Endothelial cell of umbilical vein (primary cell): ENCODE measurements at regions of chr4 and their contacts with region 1.

Region 1: DNA sequence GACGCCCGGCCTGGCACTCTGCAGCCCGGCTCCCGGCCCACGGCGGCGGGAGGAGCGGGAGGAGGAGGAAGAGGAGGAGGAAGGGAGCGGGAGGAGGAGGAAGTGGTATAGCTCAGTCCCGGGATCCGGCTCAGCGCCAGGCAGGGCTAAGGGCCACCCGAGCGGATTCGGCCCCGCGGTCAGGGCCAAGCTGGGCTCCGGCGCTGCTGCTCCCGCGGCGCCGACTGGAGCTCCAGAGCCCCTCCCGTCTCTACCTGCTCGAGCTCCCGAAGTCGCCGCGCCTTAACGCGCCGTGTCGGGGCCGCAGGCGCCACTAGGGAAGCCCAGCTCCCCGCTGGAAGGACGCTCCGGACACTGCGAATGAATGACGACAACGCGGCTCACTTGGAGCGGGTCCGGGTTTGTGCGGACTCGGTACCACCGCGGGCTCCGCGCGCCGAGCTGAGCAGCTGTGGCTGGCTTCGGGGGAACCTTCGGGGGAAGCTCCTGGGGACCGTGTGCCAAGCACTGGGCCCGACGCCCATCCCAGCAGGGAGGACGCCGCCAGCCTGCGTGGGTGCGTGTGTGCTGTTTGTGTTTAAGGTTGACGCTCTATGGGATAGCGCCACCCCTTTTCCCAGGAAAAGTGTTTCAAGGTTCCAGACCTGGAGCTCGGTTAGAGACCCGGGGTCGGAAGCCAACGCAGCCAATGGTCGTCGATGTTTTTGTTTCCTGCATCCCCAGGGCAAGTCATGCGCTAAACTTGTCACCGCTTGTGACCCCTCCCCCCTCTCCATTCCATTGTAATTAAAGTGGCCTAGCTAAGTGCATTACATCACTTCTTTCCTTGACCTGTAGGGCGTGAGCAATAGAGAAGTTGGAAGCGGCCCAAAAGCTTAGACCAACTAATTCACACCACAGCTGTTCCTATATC is at the start of gene TBC1D9:
- DNase-seq: peak; percentile 97
- H3K4me3 ChIP-seq: peak within 1 kb of the TSS; percentile 69 to 89 (median 79)
- H3K27ac ChIP-seq: peak within 1 kb of the TSS; percentile 98
- H3K4me1 ChIP-seq: peaks cover 14% of the 10 kb centered on the region
- H3K27me3 ChIP-seq: no peaks in the 10 kb centered on the region
- CTCF ChIP-seq: peak; percentile 4 to 9
- POLR2A ChIP-seq: peak; percentile 72
- total RNA-seq, gene TBC1D9: 43.4 and 45.3 TPM in 2 replicates

Region 2: DNA sequence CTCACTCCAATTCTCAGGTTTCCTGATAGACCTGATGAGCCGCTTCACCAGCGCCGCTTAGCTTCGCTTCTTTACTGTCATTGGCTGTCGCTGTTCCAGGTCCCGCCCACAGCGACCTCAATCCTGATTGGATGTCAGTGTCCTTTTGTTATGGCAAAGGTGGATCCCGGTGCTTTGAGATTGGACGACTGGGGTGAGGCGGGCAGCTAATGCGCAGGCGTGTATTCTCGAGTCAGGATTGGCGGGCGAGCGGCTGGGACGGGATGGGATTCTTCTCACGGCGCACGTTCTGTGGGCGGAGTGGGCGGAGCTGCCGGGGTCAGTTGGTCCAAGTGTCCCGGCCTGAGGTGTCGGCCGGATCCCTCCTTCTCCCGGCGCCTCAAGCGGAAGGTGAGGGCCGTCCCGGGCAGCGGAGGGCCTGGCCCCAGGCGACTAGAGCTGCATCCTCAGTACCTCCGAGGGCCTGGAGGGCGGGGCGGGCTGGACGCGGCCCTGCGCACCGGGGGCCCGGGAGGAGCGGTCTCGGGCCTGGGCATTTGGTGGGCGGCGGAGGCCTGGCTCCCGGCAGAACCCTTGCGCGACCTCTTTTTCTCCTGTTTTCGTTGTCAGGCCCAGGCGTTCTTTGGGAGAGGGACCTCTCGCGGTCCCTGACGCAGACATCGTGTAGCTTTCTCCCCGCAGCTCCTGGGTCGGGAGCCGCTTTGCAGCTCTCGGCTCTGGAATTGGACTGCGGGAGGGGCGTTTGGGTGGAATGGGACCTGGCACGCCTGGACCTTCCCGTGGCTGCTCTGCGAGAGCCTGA is 383.0 kb before region 1 on chr4 and contains the start of gene SCOC:
- CTCF ChIA-PET with region 1: interaction called, 3 read pairs
- POLR2A ChIA-PET with region 1: no interaction called
- dilution Hi-C with region 1: no loop called
- intact Hi-C with region 1: loop called (anchors 2 kb)
- DNase-seq: peak; percentile 100
- H3K4me3 ChIP-seq: peak within 1 kb of the TSS; percentile 76 to 92 (median 79)
- H3K27ac ChIP-seq: peak within 1 kb of the TSS; percentile 71
- H3K4me1 ChIP-seq: peaks cover 14% of the 10 kb centered on the region
- H3K27me3 ChIP-seq: no peaks in the 10 kb centered on the region
- CTCF ChIP-seq: no peak
- POLR2A ChIP-seq: peak; percentile 80
- total RNA-seq, gene SCOC: 38.3 and 38.5 TPM in 2 replicates

Region 3: GRCh38 chr4:140637836-140638235 is 118.7 kb before region 1 on chr4:
- CTCF ChIA-PET with region 1: no interaction called
- POLR2A ChIA-PET with region 1: no interaction called
- dilution Hi-C with region 1: no loop called
- intact Hi-C with region 1: loop called (anchors 1 kb)
- DNase-seq: peak; percentile 21
- H3K4me3 ChIP-seq: no peak overlapping the region
- H3K27ac ChIP-seq: no peak overlapping the region
- H3K4me1 ChIP-seq: no peaks in the 10 kb centered on the region
- H3K27me3 ChIP-seq: no peaks in the 10 kb centered on the region
- CTCF ChIP-seq: peak; percentile 41 to 50
- POLR2A ChIP-seq: no peak

Region 4: DNA sequence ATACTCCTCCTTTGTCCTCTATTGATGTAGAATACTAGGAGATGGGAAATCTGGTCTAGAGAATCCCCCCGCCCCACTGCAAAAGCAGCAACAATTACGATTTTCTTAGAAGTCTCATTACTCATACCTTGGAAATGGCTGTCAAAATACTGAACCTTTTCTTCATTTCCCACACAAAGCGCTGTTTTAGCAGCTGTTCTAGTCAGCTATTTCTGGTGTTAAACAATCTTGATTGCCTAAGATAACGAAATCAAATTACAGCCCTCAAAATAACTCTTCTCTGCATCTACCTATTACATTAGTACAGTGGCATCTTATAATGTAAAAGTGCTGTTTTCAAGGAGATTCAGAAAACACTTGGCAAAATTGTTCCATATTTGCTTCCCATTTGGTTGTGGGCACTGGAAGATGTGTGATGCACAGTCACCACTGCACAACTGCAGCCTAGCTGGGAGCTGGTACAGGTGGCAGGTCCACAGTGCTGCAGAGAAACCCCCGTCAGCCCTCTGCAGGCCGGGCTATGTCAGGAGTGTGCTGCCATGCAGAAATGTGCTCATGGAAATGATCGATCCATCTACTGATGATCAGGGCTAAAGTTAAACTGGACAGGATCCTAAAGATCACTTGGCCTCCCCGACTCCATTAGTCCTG is 50.8 kb before region 1 on chr4:
- CTCF ChIA-PET with region 1: interaction called, 3 read pairs
- POLR2A ChIA-PET with region 1: no interaction called
- dilution Hi-C with region 1: no loop called
- intact Hi-C with region 1: loop called (anchors 1 kb)
- DNase-seq: peak; percentile 62
- H3K4me3 ChIP-seq: no peak overlapping the region
- H3K27ac ChIP-seq: peak overlapping the region; percentile 33
- H3K4me1 ChIP-seq: peaks cover 26% of the 10 kb centered on the region
- H3K27me3 ChIP-seq: no peaks in the 10 kb centered on the region
- CTCF ChIP-seq: no peak
- POLR2A ChIP-seq: no peak

Region 5: GRCh38 chr4:140726776-140727500 is 29.6 kb before region 1 on chr4:
- CTCF ChIA-PET with region 1: no interaction called
- POLR2A ChIA-PET with region 1: interaction called, 3 read pairs
- dilution Hi-C with region 1: no loop called
- intact Hi-C with region 1: loop called (anchors 1 kb)
- DNase-seq: peak; percentile 77
- H3K4me3 ChIP-seq: no peak overlapping the region
- H3K27ac ChIP-seq: peak overlapping the region; percentile 58
- H3K4me1 ChIP-seq: peaks cover 31% of the 10 kb centered on the region
- H3K27me3 ChIP-seq: no peaks in the 10 kb centered on the region
- CTCF ChIP-seq: no peak
- POLR2A ChIP-seq: no peak